Left cardiac atrium (tissue), 4 donors: ENCODE measurements at regions of chr16 and their contacts with region 1.

Region 1: DNA sequence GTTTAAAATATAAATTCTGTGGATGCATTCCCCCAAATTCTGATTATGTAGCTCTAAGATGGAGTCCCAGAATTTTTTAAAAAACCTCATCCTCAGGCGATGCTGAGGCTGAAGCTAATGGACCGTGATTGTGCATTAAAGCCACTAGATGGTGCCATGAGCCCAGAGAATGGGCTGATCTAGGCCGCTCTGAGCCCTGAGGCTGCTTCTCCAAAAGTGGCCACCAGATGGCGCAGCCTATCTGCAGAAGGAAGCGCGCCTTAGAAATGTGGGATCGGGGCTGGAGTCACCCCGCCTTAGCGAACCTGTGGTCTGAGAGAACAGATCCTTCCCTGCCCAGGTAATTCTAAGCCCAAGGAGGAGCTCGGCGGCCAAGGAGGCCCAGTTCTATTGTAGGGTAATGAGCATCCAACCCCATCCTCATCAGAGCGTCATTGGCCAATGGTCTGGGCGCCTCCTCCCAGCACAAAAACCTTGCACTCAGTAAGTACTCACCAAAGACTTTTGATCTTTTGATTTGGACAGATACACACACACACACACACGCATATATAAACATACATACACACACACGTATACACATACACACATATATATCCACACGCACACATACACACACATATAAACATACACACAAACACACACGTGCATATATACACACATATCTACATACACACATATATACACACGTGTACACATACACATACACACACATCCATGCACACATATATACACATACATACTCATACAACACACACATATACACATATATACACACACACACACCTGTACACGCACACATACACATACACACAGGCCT is 13.7 kb upstream of the MMP2 start:
- DNase-seq: peak; percentile 89
- ATAC-seq: peak; percentile 93 to 94

Region 2: GRCh38 chr16:55502801-55503366 is 37.6 kb after region 1 on chr16:
- intact Hi-C with region 1: no loop called
- DNase-seq: peak; percentile 87
- ATAC-seq: peak; percentile 83 to 87

Region 3: DNA sequence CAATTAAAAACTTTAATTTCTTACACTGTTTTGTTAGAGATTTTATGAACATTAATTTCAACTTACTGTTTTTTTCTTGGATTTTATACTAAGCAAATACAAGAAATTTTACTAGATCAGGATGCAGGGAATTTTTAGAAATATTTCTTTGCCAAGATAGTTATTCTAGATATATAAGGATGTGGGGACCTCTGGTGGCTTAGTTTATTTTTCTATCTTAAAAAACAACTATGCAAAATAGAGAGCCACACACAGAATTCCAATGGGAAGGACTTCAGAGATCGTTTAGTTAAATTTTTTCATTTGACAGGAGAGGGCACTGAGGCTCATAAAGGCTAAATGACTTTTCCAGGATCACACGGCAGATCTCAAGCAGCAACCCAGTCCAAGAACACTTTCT is 78.2 kb after region 1 on chr16:
- intact Hi-C with region 1: loop called (anchors 1 to 5 kb)
- DNase-seq: no peak
- ATAC-seq: peak; percentile 41 to 47

Region 4: DNA sequence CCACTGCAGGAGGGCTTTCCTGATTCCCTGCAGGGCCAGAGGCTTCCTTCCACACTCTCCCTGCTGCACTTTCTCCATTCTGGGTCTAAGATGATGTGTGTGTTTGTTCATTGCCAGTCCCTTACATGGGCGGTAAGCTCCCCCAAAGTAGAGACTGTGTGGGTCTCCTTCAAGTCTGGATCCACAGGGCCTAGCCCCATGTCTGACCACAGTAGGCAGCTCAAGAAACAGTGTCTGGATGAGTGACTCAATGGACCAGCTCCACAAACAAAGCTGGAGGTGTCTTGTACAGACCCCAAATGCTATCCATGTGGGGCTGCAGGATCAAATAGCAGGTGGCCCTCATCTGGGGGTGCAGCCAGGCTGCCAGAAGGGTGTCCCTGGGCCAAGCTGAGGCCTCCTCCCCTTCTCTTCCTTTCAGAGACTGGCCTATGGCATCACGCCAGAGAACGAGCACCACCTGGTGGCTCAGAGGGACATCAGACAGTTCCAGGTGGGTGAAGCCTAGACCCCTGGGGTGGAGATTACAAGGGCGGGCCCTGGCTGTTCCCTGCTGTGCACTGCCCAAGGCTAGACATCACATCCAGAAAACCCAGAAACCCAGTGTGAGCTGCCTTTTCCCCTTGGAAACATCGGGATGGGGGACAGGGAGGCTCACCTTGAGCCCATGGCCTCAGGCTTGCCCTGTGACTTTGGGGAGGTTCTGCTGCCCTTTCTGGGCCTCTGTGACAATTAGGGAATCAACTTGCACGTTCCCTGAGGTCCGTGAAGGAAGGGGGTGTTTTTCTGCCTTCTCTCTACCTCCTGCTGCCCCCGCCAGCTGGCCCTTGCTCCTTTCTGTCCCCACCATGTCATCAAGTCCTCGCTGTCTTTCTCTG is 236.4 kb after region 1 on chr16:
- intact Hi-C with region 1: loop called (anchors 1 to 5 kb)
- DNase-seq: peak; percentile 61
- ATAC-seq: peak; percentile 53 to 73

Region 5: GRCh38 chr16:55842369-55843104 is 377.2 kb after region 1 on chr16:
- intact Hi-C with region 1: loop called (anchors 10 kb)
- DNase-seq: no peak
- ATAC-seq: peak; percentile 51 to 80